Kidney (tissue), 22 donors: ENCODE measurements at regions of chr5 and their contacts with region 1.

Region 1: GRCh38 chr5:72141440-72142355 is 34.4 kb downstream of the MAP1B start:
- DNase-seq: peak in 4 of 5 donors; percentile 42 to 71 (median 62)
- H3K4me3 ChIP-seq: no peak overlapping the region
- H3K27ac ChIP-seq: peak overlapping the region in 1 of 2 donors; percentile 62
- H3K4me1 ChIP-seq: peaks cover 0 to 2% (median 0%) of the 10 kb centered on the region in 3 donors
- H3K27me3 ChIP-seq: no peaks in the 10 kb centered on the region
- CTCF ChIP-seq: no peak

Region 2: GRCh38 chr5:72268753-72269410 is 127.2 kb after region 1 on chr5:
- intact Hi-C with region 1: no loop called
- DNase-seq: peak in 2 of 5 donors; percentile 23 to 53
- H3K4me3 ChIP-seq: no peak overlapping the region
- H3K27ac ChIP-seq: no peak overlapping the region
- H3K4me1 ChIP-seq: peaks cover 0 to 4% (median 0%) of the 10 kb centered on the region in 3 donors
- H3K27me3 ChIP-seq: no peaks in the 10 kb centered on the region
- CTCF ChIP-seq: peak; percentile 12

Region 3: DNA sequence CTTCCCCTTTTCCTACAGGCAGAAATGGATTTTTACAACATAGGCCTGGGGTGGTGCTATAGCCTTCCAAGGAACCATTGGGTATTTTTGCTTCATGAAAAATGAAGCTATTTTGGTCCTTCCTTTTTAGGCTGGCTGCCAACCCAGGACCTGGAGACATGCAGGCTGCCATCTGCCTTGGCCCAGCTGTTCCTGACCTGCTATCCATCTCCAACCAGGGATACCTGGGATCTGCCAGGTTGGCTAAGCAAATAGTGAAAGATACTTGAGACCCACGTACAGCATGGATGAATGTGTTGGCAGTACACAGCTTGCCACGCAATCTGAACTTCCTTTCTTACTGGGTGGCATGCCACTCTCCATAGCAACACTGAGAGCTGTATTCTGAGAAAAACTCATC is 147.2 kb after region 1 on chr5:
- intact Hi-C with region 1: no loop called
- DNase-seq: no peak
- H3K4me3 ChIP-seq: no peak overlapping the region
- H3K27ac ChIP-seq: no peak overlapping the region
- H3K4me1 ChIP-seq: no peaks in the 10 kb centered on the region
- H3K27me3 ChIP-seq: no peaks in the 10 kb centered on the region
- CTCF ChIP-seq: no peak

Region 4: DNA sequence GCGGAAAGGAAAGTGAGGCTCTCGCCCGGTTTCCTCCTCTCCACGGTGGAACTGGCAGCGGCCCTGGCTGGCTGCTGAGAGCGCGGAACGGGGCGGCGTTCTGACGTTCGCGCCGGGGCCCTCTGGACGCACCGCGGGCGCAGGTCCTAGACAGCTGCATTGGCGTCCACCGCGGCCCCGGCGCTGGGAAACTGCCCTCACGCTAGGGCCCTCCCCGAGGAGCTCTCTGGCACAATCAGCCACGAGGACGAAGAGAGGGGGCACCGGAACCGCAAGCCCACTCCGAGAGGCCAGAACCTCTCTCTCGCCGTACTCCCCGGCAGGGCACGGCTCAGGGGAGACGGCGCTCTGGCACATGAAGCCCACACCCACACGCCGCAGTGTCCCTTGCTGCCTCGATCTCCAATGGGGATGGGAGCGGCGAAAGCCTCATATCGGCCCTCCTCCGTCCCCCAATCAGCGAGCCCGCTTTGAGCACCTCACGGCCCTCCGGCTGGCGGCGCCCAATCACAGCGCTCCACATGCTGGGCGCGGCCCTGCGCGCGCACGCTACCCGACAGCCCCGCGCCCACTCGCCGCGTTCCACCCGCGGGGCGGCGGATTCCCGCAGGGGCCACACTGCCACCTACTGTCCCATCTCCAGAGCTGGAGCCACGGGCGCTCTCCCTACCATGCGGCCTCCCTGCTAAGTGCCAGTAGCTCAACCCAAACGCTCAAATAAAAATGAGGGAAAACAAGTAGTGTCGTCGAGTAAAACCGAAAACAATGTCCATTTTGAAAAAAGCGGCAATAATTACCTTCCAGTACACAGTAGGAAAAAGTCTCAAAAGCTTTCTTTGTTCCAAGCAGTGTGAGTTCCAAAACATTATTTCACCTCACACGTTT is 166.5 kb after region 1 on chr5:
- intact Hi-C with region 1: loop called (anchors 10 kb)
- DNase-seq: peak; percentile 97 to 99 (median 99)
- H3K4me3 ChIP-seq: peak overlapping the region; percentile 73 to 84 (median 80)
- H3K27ac ChIP-seq: peak overlapping the region; percentile 91 to 95
- H3K4me1 ChIP-seq: no peaks in the 10 kb centered on the region
- H3K27me3 ChIP-seq: no peaks in the 10 kb centered on the region
- CTCF ChIP-seq: peak; percentile 90